Dorsolateral prefrontal cortex (tissue), 120 donors: ENCODE measurements at regions of chr5 and their contacts with region 1.

Region 1: DNA sequence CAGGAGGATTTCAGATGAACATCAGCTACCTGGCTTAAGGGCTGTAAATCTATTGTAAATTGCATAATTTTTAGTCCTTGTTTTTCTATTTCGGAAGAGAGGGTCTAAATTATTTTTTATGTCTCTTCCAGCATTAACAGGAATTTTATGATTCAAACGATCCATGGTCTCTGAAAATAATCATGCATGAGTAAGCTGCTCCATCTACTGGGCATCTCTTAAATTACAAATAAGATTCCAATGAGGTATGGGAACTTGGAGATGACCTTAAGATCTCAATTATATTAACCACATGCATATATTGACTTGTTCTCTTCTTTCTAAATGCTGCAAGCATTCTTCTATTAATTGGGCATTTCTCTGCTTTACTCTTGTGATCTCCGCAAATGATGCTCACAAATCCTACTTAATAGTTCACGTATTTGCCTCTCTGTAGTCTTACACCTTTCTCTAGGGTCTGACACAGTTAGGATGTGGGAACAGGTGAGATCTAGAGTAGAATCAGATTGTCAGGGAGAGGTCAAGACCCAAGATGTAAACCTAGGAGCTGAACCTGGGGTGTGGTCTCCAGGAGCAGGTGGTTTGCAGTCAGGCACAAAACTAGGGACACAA is 86.9 kb downstream of the NUDT12 start:
- DNase-seq: no peak
- H3K4me3 ChIP-seq: peak overlapping the region in 1 of 59 donors; percentile 21
- H3K27ac ChIP-seq: no peak overlapping the region
- H3K27me3 ChIP-seq: no peaks in the 10 kb centered on the region
- CTCF ChIP-seq: peak; percentile 46 to 93 (median 78)

Region 2: DNA sequence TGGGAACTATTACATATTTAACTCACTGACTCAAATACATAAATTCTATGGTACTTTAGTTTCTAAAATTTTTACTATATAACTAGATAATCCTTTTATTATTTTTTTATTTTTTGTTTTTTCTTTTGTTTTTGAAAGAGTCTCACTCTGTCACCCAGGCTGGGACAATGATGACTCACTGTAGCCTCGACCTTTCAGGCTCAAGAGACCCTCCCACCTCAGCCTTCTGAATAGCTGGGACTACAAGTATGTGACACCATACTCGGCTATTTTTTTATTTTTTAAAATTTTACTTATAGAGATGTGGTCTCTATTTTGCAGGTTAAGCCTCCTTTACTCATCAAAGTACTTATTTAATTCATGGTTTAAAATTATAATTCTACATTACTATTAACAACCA is 1087.5 kb before region 1 on chr5:
- intact Hi-C with region 1: no loop called
- DNase-seq: no peak
- H3K4me3 ChIP-seq: no peak overlapping the region
- H3K27ac ChIP-seq: no peak overlapping the region
- H3K27me3 ChIP-seq: no peaks in the 10 kb centered on the region
- CTCF ChIP-seq: no peak

Region 3: GRCh38 chr5:103232393-103232999 is 243.2 kb before region 1 on chr5:
- intact Hi-C with region 1: loop called (anchors 1 to 5 kb)
- DNase-seq: no peak
- H3K4me3 ChIP-seq: no peak overlapping the region
- H3K27ac ChIP-seq: no peak overlapping the region
- H3K27me3 ChIP-seq: no peaks in the 10 kb centered on the region
- CTCF ChIP-seq: peak; percentile 42 to 90 (median 78)

Region 4: GRCh38 chr5:103389846-103390245 is 85.9 kb before region 1 on chr5:
- intact Hi-C with region 1: loop called in 1 of 2 experiments (anchors 10 kb)
- DNase-seq: no peak
- H3K4me3 ChIP-seq: peak overlapping the region in 5 of 59 donors; percentile 2 to 18 (median 9)
- H3K27ac ChIP-seq: peak overlapping the region in 50 of 59 donors; percentile 0 to 81 (median 60)
- H3K27me3 ChIP-seq: no peaks in the 10 kb centered on the region
- CTCF ChIP-seq: no peak

Region 5: GRCh38 chr5:103519550-103519949 is 43.8 kb after region 1 on chr5:
- intact Hi-C with region 1: loop called in 1 of 2 experiments (anchors 2 kb)
- DNase-seq: no peak
- H3K4me3 ChIP-seq: no peak overlapping the region
- H3K27ac ChIP-seq: no peak overlapping the region
- H3K27me3 ChIP-seq: no peaks in the 10 kb centered on the region
- CTCF ChIP-seq: peak in 1 of 56 donors; percentile 11